Activated T-helper 2 cell treated with anti-CD3 and anti-CD28 coated beads, Interferon-gamma antibody, Interleukin-2, Interleukin-4, amounts not matched to agents 10 μg/mL and 5 μg/mL and 100 μg/mL, durations not matched to agents 14 hours and 24 hours and 36 hours (primary cell): ENCODE measurements at regions of chr12 and their contacts with region 1.

Region 1: GRCh38 chr12:46459861-46460545 is 87.4 kb upstream of the SLC38A2 start:
- DNase-seq: no peak
- H3K4me3 Mint-ChIP-seq: peak overlapping the region; percentile 80
- H3K27ac Mint-ChIP-seq: peak overlapping the region; percentile 96
- H3K4me1 Mint-ChIP-seq: peaks cover 54% of the 10 kb centered on the region
- H3K27me3 Mint-ChIP-seq: no peaks in the 10 kb centered on the region

Region 2: GRCh38 chr12:45990468-45991283 is 469.3 kb before region 1 on chr12 and contains the start of gene SCAF11:
- intact Hi-C with region 1: loop called (anchors 5 kb)
- DNase-seq: peak; percentile 100
- H3K4me3 Mint-ChIP-seq: peak within 1 kb of the TSS; percentile 93
- H3K27ac Mint-ChIP-seq: peak within 1 kb of the TSS; percentile 98
- H3K4me1 Mint-ChIP-seq: peaks cover 38% of the 10 kb centered on the region
- H3K27me3 Mint-ChIP-seq: peaks cover 6% of the 10 kb centered on the region
- total RNA-seq, gene SCAF11: 125 and 128 TPM in 2 replicates

Region 3: DNA sequence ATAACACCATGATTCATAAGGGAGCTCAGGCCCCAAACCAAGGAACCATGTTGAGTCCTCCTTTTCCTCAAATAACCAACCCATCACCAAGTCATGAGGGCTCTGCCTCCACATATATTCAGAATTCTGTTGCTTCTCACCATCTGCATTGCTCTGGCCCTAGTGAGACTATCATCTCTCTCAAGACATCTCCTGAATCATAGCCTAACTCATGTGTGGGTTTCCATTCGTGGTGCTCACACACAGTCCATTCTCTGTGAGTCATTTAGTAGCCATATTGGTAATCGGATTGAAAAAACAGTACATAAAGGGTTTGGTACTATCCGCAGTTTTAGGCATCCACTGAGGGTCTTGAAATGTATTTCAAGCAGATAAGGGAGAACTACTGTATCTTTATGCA is 82.3 kb before region 1 on chr12:
- intact Hi-C with region 1: loop called (anchors 1 kb)
- DNase-seq: no peak
- H3K4me3 Mint-ChIP-seq: no peak overlapping the region
- H3K27ac Mint-ChIP-seq: peak overlapping the region; percentile 64
- H3K4me1 Mint-ChIP-seq: peaks cover 58% of the 10 kb centered on the region
- H3K27me3 Mint-ChIP-seq: no peaks in the 10 kb centered on the region

Region 4: DNA sequence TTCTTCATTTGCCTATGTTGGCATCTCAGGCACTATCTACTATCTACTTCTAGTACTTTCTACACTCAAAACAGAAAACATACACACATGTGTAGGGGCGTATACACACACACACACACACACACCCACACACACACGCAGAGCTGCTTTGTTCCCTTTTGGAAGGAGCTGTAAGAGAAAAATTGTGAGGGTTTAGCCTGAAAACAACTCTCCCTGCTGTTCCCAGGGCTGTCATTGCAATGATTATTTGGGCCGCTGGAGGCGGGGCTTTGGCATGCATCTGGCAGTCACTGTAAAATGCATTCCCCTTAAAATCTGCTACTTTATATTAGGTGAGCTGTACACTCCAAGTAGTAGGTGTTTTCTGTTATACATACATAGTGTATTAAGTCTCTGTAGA is 58.3 kb before region 1 on chr12:
- intact Hi-C with region 1: loop called (anchors 5 kb)
- DNase-seq: no peak
- H3K4me3 Mint-ChIP-seq: no peak overlapping the region
- H3K27ac Mint-ChIP-seq: no peak overlapping the region
- H3K4me1 Mint-ChIP-seq: peaks cover 65% of the 10 kb centered on the region
- H3K27me3 Mint-ChIP-seq: no peaks in the 10 kb centered on the region

Region 5: DNA sequence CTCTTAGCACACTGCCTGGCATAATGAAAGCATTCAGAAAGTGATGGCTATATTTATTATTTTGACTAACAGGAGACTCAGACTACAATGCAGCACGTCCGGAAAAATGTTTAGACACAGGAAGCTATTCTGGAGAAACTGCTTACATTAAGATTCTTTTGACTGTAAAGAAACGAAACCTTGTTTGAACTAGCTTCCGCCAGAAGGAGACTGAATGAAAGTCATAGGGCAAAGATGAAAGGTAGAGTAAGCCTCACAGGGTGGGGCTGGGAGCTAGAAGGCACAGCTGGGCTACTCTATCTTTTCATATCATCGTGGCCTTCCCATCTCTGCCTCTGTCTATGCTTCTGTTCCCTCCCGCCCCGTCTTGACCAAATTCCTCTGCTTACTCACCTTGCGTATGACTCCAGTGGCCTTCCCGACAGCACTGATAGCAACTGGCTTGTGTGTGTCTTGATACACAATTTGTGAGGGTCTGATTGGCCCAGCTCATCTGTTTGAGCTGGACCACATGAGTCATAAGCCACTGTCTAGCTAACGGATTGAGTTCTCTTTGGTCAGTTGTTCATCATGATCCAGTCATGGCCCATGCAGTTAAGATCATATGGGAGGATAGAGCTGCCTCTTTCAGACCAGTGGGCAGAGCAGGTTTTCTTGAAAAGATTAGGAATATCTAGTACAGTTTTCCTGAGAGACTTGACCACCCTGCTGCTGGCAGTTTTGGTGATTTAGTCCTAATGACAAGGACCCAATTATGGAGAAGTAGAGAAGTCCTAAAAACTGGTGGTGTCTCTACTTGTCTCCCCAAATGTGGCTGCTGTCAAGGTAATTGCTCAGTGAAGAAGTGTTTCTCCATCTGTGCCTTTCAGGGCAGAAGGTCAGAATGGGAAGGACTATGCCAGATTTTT is 64.1 kb after region 1 on chr12:
- intact Hi-C with region 1: loop called (anchors 2 kb)
- DNase-seq: peak; percentile 55
- H3K4me3 Mint-ChIP-seq: peak overlapping the region; percentile 79
- H3K27ac Mint-ChIP-seq: peak overlapping the region; percentile 97
- H3K4me1 Mint-ChIP-seq: peaks cover 53% of the 10 kb centered on the region
- H3K27me3 Mint-ChIP-seq: no peaks in the 10 kb centered on the region

Region 6: DNA sequence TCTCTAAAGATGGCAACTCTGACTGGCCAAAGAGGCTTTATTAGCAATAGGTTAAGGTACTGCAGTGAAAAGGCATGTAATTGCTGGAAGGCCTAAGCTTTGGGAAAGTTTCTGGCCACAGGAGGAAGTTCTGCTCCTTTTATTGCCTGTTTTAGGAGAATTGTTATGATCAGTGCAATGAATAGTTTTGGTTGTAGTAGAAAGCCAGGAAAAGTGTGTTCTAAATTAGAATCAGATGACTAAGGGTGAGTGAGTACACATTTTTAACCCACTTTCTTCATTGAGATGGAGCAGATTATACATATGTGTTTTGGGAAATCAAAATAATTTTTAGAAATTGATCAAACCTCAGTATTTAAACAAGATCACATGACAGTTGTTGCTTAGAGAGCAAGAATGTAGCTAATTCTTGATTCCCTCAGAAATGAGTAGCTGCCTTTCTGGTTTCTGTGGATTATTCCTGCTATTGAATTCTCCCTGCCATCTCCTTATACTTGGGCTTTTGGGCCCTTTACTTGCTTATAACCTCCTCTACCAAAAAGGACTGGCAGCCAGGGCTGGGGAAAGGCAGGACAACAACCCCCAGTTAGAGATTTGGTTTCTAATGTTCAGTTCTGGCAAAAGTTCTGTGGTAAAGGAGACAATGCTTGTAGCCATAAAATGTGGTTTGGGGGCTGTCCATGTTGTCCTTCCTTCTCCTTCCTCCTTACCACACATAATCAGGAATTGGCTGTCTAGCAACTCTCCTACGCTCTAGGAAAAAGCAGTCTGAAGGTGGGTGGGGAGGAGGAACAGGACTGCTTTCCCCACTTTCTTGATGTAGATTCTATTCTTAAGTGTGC is 148.6 kb after region 1 on chr12:
- intact Hi-C with region 1: loop called (anchors 2 kb)
- DNase-seq: no peak
- H3K4me3 Mint-ChIP-seq: peak overlapping the region; percentile 37
- H3K27ac Mint-ChIP-seq: peak overlapping the region; percentile 65
- H3K4me1 Mint-ChIP-seq: peaks cover 37% of the 10 kb centered on the region
- H3K27me3 Mint-ChIP-seq: no peaks in the 10 kb centered on the region